ENCODE measurements at regions of chr10 and their contacts with region 1.

Region 1: DNA sequence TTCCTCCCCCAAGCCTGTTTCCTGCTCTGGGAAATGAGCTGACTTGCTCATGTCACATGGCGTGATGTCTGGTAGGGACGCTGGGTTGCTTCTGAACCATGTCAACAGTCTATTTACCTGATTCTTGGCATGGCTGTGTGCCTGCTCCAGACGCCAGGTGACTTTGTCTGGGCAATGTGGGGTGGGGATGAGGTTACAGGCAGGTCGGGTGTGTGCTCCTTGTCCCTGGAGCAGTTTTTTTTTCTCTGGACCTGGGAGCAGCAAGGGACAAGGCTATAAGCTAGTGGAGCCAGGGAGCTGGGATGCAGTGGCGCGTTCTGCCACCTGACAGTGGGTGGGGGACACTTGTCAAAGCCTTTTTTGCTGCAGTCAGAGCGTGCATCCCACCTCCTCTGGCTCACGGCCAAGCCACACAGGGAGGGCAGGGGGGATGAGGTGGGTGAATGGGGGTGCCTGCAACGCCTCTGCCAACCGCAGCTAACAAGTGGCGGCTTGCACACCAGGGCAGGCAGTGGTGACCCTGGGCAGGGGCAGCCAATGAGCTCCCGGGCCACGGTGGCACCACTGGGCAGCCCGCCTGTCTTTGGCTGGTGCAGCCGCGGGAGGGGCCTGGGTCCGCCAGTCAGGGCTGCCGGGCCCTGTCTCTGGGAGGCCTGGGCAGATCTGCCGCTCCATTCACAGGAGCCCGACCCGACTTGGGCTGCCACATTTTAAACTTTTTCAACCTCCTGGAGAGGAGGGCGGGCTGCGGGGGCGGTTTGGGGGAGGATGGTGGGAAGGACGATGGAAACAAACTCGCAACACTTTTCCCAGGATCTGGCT is 22.9 kb downstream of the DNAJB12 start:
- DNase-seq: peak; percentile 71 to 96 (median 91)

Region 2: GRCh38 chr10:71963756-71964668 is 367.8 kb before region 1 on chr10 and contains the start of gene CHST3:
- intact Hi-C with region 1: loop called (anchors 10 kb)
- DNase-seq: peak in 40 of 42 donors; percentile 54 to 88 (median 74)

Region 3: GRCh38 chr10:72058989-72059842 is 272.6 kb before region 1 on chr10:
- intact Hi-C with region 1: loop called (anchors 10 kb)
- DNase-seq: peak in 5 of 42 donors; percentile 31 to 62 (median 48)

Region 4: DNA sequence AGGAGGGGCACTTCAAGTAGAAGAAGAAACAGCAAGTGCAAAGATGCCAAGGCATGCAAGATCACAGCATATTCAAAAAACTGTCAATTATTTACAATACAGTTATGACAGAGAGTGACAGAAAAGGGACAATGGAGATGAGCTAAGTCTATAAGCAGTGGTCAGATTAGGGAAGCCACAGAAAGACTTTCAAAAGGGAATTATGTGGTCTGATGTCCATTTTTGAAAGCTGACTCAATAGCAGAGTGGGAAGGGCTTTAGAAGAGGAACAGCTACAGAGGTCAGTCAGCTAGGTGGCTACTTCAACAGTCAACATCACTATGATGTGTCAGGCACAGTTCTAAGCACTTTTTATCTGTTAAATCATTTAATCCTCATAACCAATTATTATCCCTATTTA is 198.3 kb before region 1 on chr10:
- intact Hi-C with region 1: loop called (anchors 10 kb)
- DNase-seq: no peak

Region 5: DNA sequence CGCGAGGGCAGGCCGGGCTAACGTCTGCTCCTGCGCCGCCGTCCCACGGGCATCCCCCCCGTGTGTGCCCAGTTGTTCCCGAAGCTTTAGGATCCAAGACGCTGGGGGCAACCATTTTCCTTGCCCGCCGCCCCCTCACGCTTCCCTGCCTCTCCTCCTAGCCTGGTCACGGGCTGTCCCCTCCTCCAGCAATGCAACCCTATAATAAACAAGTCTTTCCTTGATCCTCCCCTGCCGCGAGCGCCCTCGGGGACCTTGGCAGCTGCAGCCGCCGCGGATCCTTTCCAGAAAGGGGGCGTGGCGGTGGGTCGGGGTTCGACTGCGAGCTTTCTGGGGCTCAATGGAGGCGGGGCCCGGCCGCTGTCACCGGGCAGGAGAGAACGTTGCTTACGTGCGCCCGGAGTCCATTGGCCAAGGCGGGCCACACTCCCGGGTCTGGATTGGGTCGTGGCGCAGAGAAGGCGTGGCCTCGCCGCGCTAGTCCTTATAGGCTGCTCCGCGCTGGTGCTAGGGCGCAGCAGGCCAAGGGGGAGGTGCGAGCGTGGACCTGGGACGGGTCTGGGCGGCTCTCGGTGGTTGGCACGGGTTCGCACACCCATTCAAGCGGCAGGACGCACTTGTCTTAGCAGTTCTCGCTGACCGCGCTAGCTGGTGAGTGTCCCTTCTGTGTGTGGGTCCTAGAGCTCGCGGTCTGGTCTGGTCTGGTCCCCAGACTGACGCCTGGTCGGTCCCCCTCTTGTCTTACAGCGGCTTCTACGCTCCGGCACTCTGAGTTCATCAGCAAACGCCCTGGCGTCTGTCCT is 58.2 kb before region 1 on chr10 and contains the start of gene DDIT4:
- intact Hi-C with region 1: loop called (anchors 5 kb)
- DNase-seq: peak; percentile 99 to 100 (median 100)

Region 6: DNA sequence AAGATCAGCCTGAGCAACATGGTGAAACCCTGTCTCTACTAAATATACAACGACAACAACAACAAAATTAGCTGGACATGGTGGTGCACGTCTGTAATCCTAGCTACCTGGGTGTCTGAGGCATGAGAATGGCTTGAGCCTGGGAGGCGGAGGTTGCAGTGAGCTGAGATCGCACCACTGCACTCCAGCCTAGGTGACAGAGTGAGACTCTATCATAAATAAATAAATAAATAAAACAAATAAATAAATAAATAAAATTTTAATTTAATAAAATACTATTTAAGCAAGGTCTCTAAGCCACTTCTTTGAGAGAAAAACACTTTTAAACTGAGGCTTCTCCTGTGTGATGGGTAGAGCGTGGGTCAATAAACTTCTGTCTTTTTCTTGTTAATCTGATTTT is 255.8 kb after region 1 on chr10:
- intact Hi-C with region 1: no loop called
- DNase-seq: no peak